Vagina (tissue), 2 donors: ENCODE measurements at regions of chr15 and their contacts with region 1.

Region 1: GRCh38 chr15:56931639-56932508 is 13.4 kb downstream of the TCF12 start:
- DNase-seq: no peak
- H3K4me3 ChIP-seq: no peak overlapping the region
- H3K27ac ChIP-seq: no peak overlapping the region
- H3K4me1 ChIP-seq: peaks cover 72% of the 10 kb centered on the region
- H3K27me3 ChIP-seq: no peaks in the 10 kb centered on the region
- CTCF ChIP-seq: no peak
- POLR2A ChIP-seq: no peak

Region 2: DNA sequence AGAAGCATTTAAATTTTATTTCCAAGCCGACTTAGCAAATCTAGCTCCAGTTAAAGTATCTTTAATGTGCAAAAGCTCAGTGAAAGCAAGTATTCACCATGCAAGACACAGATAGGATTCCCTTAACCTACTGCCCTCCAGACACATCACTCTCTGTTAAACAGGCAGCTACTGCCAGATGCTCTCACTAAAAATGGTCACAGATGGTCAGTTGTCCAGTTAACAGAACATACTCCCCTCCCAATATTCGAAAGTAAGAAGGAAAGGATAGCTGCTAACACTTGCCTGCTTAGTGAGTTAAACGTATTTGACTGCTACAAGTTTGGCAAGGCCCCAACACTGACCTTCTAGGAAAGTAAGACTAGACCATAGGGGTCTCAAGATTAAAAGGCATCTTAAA is 1262.6 kb before region 1 on chr15:
- intact Hi-C with region 1: no loop called
- DNase-seq: no peak
- H3K4me3 ChIP-seq: no peak overlapping the region
- H3K27ac ChIP-seq: no peak overlapping the region
- H3K4me1 ChIP-seq: no peaks in the 10 kb centered on the region
- H3K27me3 ChIP-seq: no peaks in the 10 kb centered on the region
- CTCF ChIP-seq: no peak
- POLR2A ChIP-seq: no peak

Region 3: DNA sequence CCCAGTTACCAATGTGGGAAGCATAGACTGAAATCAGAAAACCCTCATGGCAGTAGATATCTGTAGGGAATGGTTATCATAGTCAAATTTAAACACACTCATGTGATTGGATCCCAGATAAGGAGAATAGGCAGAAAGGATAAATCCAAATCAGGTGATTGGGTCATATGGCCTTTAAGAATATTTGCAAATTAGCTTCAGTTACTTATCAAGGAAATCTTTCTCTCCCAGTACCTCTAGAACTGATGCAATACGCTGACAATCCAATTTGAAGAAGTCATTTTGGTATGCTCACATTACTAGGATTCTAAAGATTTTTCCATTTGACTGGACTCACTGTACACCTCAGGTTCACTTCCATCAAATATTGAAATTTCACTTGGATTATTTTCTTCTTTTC is 379.2 kb before region 1 on chr15:
- intact Hi-C with region 1: no loop called
- DNase-seq: no peak
- H3K4me3 ChIP-seq: no peak overlapping the region
- H3K27ac ChIP-seq: no peak overlapping the region
- H3K4me1 ChIP-seq: no peaks in the 10 kb centered on the region
- H3K27me3 ChIP-seq: no peaks in the 10 kb centered on the region
- CTCF ChIP-seq: no peak
- POLR2A ChIP-seq: no peak

Region 4: DNA sequence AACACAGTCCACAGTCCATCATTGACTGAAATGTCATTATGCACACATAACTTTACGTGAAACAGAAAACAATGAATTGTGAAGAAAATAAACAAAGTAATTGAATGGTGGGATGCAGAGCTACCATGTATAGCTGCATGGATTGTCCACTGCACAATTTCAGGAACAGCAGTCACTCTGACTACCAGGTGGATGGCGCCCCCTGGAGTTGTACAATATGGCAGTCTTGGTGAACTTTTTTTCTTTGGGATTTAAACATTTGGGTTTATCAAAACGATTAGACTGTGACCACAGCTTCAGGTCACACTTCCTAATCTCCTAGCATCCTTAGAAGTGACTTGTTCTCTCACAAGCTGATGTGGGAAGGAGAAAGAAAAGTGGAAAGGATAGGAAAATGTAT is 62.3 kb before region 1 on chr15:
- intact Hi-C with region 1: no loop called
- DNase-seq: no peak
- H3K4me3 ChIP-seq: no peak overlapping the region
- H3K27ac ChIP-seq: no peak overlapping the region
- H3K4me1 ChIP-seq: no peaks in the 10 kb centered on the region
- H3K27me3 ChIP-seq: no peaks in the 10 kb centered on the region
- CTCF ChIP-seq: peak; percentile 13 to 49 (median 37)
- POLR2A ChIP-seq: no peak

Region 5: GRCh38 chr15:58933281-58934113 is 2001.6 kb after region 1 on chr15 and contains the start of gene SLTM:
- intact Hi-C with region 1: loop called (anchors 5 kb)
- DNase-seq: peak in 1 of 2 donors; percentile 95
- H3K4me3 ChIP-seq: peak within 1 kb of the TSS; percentile 58 to 70
- H3K27ac ChIP-seq: peak within 1 kb of the TSS; percentile 98
- H3K4me1 ChIP-seq: peaks cover 29% of the 10 kb centered on the region
- H3K27me3 ChIP-seq: no peaks in the 10 kb centered on the region
- CTCF ChIP-seq: peak in 1 of 3 experiments; percentile 18
- POLR2A ChIP-seq: peak in 1 of 2 donors; percentile 92
- total RNA-seq, gene SLTM: 76.9 TPM